ENCODE measurements at regions of chr3 and their contacts with region 1.

Region 1: DNA sequence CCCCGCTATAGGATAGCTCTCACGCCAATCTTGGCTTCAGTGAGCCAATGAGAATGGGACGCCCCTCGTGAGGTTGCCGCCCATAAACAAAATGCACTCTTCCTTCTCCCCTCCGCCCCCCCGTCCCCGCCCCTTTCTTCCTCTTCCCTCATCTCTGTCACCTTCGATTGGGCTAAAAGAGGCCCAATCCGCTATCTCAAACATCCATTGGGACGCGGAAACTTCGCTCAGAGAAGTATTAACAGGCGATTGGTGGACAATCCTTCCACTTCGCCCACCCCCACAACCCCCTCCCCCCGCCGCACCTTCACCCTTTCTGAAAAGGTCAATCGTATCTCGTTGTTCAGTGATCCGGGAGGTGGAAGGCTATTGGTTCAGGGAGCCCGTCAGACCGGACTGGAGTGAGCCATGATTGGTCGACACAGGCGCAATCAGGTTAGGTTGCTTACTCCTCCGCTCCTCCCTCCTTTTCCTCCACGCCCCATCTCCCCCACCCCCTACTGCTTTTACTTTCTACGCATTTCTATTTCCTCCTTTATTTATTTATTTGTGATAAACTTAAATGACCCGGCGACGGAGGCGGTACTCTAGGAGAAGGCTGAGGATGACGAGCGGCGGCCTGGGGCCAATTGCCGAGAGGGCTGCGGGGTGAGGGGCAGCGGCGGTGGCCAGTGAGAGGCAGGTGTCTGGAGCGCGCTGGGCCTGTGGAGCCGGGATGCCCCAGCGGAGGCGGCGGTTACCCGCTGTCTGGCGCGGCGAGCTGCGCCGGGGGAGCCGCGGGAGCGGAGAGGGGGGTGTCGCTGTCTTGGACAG is 447 bp upstream of the ZBTB20 start:
- DNase-seq: peak; percentile 98

Region 2: DNA sequence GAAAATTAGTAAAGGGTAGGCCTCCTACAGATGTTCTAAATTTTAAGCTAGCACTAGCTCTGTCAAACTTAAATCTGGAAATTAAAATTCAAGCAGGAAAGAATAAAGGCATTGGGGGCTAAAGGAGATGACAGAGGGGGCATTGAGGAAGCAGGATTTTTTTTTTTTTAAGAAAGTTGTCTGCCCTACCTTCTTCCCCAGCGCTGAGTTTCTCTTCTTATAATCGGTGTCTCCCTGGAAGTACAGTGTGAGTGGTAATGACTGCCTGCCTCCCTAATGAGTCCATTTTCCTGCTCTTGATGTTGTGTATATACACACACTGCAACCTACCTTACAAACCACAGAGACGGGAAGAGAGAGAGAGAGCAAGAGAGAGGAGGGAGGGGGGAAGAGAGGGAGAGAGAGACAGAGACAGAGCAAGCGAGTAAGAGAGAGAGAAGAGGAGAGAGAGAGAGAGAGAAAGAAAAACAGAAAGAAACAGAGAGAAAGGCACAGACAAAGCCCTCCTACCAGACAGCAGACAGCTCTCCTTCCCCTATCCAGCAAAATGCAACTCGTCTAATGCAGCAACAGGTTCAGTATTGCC is 47.5 kb before region 1 on chr3:
- intact Hi-C with region 1: loop called (anchors 2 kb)
- DNase-seq: no peak

Region 3: DNA sequence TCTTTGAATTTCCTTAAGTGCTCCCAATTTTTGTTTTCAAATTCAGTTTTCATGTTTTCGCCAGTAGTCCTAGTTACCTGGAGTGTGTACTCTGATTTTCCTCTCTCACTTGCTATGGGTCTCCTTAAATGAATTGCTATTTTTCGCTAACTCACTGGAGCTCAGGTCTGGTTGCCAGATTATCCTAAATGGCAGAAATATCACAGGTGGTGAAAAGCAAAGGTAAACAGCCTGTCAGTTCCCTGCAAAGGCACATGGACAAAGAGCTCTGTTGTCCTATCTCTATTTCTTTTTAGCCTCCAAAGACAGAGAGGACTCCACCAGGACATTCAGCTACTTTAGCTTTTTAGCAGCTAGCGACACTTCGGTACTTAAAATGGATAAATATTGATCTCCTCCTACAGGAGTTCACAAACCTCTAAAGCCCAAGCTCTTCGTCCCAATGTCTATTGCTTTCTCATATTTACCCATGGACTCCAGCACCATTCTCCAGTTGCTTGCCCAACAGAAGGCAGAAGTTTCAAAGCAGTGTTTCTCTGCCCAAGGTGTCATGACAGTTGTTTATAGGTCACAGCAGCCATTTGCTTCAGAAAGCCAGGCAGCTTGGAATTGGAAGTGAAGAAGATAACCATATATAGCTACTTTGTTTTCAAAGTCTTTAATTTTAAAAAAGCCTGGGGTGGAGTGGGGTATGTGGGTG is 12.7 kb before region 1 on chr3:
- intact Hi-C with region 1: no loop called
- DNase-seq: no peak